ENCODE measurements at regions of chr10 and their contacts with region 1.

Region 1: GRCh38 chr10:74081192-74081803 is 69.3 kb downstream of the AP3M1 start:
- DNase-seq: peak in 6 of 10 donors; percentile 17 to 54 (median 46)
- H3K4me3 ChIP-seq: no peak overlapping the region
- H3K27ac ChIP-seq: peak overlapping the region in 12 of 59 donors; percentile 1 to 65 (median 20)
- H3K27me3 ChIP-seq: no peaks in the 10 kb centered on the region
- CTCF ChIP-seq: peak; percentile 37 to 83 (median 72)

Region 2: GRCh38 chr10:73879296-73880173 is 201.8 kb before region 1 on chr10:
- intact Hi-C with region 1: loop called in 1 of 2 experiments (anchors 10 kb)
- DNase-seq: peak in 8 of 10 donors; percentile 54 to 82 (median 76)
- H3K4me3 ChIP-seq: no peak overlapping the region
- H3K27ac ChIP-seq: peak overlapping the region in 4 of 59 donors; percentile 9 to 25 (median 13)
- H3K27me3 ChIP-seq: no peaks in the 10 kb centered on the region
- CTCF ChIP-seq: peak; percentile 43 to 96 (median 86)